PC-9 (cell line): ENCODE measurements at regions of chr6 and their contacts with region 1.

Region 1: DNA sequence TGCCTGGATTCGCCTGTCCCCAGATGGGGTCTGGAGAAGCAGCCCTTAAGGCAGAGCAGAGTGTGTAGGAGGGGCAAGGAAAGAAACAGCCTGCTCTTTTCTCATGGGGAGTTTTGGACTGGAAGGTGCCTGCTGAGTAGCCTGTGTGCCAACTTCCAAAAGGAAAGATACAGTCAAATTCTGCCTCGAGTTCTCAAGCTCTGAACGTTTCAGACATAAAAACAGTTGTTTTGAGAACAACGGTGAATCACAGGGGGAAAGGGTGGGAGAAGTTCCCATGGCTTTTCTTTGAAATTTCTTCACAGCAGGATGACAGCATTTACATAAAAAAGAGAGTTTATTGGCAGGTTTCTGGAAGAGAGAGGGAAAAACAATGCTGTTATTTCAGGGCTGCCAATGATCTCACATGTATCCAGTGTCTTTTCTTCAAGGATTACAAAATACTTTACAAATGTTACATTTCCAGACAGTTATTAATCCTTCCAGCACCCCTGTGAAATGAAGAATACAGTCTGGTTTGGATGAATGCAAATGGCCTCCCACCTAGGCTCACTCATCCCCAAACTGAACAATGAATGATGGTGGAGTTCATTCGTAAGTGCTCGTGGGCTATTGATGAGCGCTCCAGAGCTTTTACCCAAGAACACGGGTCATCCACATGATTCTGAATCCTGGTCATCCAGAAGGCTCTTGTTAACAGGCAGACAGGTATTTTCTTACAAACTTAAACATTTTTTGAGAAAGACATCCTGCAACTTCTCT is 33.8 kb upstream of the ECI2 start:
- DNase-seq: no peak
- H3K4me3 ChIP-seq: no peak overlapping the region
- H3K27ac ChIP-seq: no peak overlapping the region
- H3K4me1 ChIP-seq: no peaks in the 10 kb centered on the region
- H3K27me3 ChIP-seq: no peaks in the 10 kb centered on the region
- CTCF ChIP-seq: no peak

Region 2: DNA sequence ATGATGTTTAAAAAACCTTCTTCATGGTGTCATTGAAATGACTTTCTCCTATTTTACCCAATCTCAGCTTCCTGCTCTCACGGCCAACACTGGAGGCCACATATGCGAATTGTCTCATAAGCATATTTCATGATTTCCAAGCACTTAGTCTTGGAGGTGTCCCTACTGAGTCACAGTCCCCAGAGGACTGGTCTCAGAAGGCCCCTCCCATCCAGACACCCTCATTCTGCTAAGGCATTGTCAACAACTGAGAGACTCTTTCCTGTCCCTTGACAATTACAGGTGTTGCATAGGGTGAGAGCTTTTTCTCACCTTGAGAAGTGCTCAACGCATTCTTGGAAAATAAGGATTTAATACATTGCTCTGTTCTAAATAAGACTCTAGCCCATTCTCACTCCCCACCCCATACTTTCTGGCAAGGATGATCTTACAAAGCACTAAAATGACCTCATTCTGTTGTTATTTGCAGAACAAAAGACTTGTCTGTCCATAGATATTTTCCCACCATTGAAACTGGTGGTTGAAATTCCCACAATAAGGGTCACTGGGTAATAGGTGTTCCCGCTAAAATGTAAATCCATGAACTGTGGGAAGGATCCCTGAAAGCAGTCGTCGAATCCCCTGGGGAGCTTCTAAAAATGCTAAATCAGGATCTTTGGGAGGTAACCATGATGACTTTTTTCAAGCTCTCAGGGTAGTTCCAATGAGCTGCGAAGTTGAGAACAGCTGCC is 680.0 kb before region 1 on chr6:
- CTCF ChIA-PET with region 1: no interaction called
- POLR2A ChIA-PET with region 1: no interaction called
- intact Hi-C with region 1: no loop called
- DNase-seq: peak in 1 of 2 experiments; percentile 47
- H3K4me3 ChIP-seq: no peak overlapping the region
- H3K27ac ChIP-seq: no peak overlapping the region
- H3K4me1 ChIP-seq: no peaks in the 10 kb centered on the region
- H3K27me3 ChIP-seq: peaks cover 5% of the 10 kb centered on the region; the same call in 1 of the 2 replicates
- CTCF ChIP-seq: no peak

Region 3: DNA sequence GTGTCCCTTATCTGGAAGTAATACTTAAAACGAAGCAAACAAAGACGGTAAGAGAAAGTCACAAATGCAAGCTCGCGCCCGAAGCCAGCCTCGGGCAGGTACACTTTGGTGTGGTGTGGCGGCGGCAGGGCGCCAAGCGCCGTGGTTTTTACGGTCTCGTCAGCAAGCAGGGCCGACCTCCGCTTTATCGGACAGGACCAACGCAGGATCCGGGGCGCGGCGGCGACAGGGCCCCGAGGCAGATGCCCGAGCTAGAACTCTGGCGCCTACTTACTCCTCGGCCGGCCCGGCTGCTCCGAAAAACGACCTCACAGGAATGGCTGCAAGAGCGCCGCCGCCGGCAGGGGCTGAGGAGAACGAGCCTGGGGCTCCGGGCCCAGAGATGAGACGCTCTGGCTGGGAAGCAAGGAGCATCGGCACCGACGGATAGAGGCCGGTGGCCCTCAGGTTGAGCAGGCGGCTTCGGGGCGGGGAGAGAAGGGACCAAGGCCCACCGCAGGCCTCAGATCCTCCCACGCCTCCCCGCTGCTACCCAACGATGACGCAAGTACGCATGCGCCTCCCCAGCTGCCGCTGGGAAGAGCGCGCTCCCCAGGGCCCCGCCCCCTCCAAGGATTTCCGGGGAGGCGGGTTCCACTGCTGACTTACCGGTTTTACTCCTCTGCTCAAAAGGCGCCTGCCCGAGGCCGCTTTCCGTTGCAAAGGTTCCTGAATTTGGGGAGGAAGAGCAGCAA is 150.9 kb before region 1 on chr6:
- CTCF ChIA-PET with region 1: no interaction called
- POLR2A ChIA-PET with region 1: no interaction called
- intact Hi-C with region 1: no loop called
- DNase-seq: peak; percentile 87 to 94
- H3K4me3 ChIP-seq: peak overlapping the region; percentile 95
- H3K27ac ChIP-seq: peak overlapping the region; percentile 90
- H3K4me1 ChIP-seq: peaks cover 25% of the 10 kb centered on the region
- H3K27me3 ChIP-seq: no peaks in the 10 kb centered on the region
- CTCF ChIP-seq: no peak; the same call in 1 of the 2 replicates

Region 4: GRCh38 chr6:4135665-4136353 is 33.4 kb before region 1 on chr6:
- CTCF ChIA-PET with region 1: interaction called, 28 read pairs
- POLR2A ChIA-PET with region 1: no interaction called
- intact Hi-C with region 1: no loop called
- DNase-seq: peak; percentile 58 to 93
- H3K4me3 ChIP-seq: peak overlapping the region; percentile 63
- H3K27ac ChIP-seq: peak overlapping the region; percentile 65
- H3K4me1 ChIP-seq: peaks cover 21% of the 10 kb centered on the region
- H3K27me3 ChIP-seq: no peaks in the 10 kb centered on the region
- CTCF ChIP-seq: no peak